T-cell (primary cell): ENCODE measurements at regions of chr4 and their contacts with region 1.

Region 1: GRCh38 chr4:22764183-22764582 is 71.4 kb downstream of the GBA3 start:
- DNase-seq: no peak
- ATAC-seq: no peak
- H3K4me3 ChIP-seq: no peak overlapping the region
- H3K4me3 Mint-ChIP-seq: no peak overlapping the region
- H3K27ac ChIP-seq: no peak overlapping the region
- H3K27ac Mint-ChIP-seq: no peak overlapping the region
- H3K4me1 ChIP-seq: no peaks in the 10 kb centered on the region
- H3K4me1 Mint-ChIP-seq: peaks cover 0 to 4% (median 4%) of the 10 kb centered on the region in 3 donors
- H3K27me3 ChIP-seq: no peaks in the 10 kb centered on the region
- H3K27me3 Mint-ChIP-seq: peaks cover 0 to 6% of the 10 kb centered on the region in 2 donors

Region 2: GRCh38 chr4:22539251-22539650 is 224.9 kb before region 1 on chr4:
- CTCF ChIA-PET with region 1: no interaction called
- POLR2A ChIA-PET with region 1: no interaction called
- DNase-seq: no peak
- ATAC-seq: no peak
- H3K4me3 ChIP-seq: no peak overlapping the region
- H3K4me3 Mint-ChIP-seq: no peak overlapping the region
- H3K27ac ChIP-seq: no peak overlapping the region
- H3K27ac Mint-ChIP-seq: no peak overlapping the region
- H3K4me1 ChIP-seq: no peaks in the 10 kb centered on the region
- H3K4me1 Mint-ChIP-seq: no peaks in the 10 kb centered on the region
- H3K27me3 ChIP-seq: no peaks in the 10 kb centered on the region
- H3K27me3 Mint-ChIP-seq: no peaks in the 10 kb centered on the region

Region 3: GRCh38 chr4:22678940-22679854 is 85.0 kb before region 1 on chr4:
- CTCF ChIA-PET with region 1: no interaction called
- POLR2A ChIA-PET with region 1: no interaction called
- DNase-seq: no peak
- ATAC-seq: no peak
- H3K4me3 ChIP-seq: no peak overlapping the region
- H3K4me3 Mint-ChIP-seq: no peak overlapping the region
- H3K27ac ChIP-seq: no peak overlapping the region
- H3K27ac Mint-ChIP-seq: no peak overlapping the region
- H3K4me1 ChIP-seq: peaks cover 0 to 34% of the 10 kb centered on the region in 2 experiments
- H3K4me1 Mint-ChIP-seq: peaks cover 33 to 59% (median 39%) of the 10 kb centered on the region in 3 donors
- H3K27me3 ChIP-seq: no peaks in the 10 kb centered on the region
- H3K27me3 Mint-ChIP-seq: no peaks in the 10 kb centered on the region

Region 4: GRCh38 chr4:23290656-23291055 is 526.5 kb after region 1 on chr4:
- CTCF ChIA-PET with region 1: no interaction called
- POLR2A ChIA-PET with region 1: interaction called in 1 of 2 experiments, 18 read pairs
- DNase-seq: no peak
- ATAC-seq: no peak
- H3K4me3 ChIP-seq: no peak overlapping the region
- H3K4me3 Mint-ChIP-seq: no peak overlapping the region
- H3K27ac ChIP-seq: no peak overlapping the region
- H3K27ac Mint-ChIP-seq: no peak overlapping the region
- H3K4me1 ChIP-seq: peaks cover 3 to 4% of the 10 kb centered on the region in 2 experiments
- H3K4me1 Mint-ChIP-seq: peaks cover 7 to 15% (median 8%) of the 10 kb centered on the region in 3 donors
- H3K27me3 ChIP-seq: no peaks in the 10 kb centered on the region
- H3K27me3 Mint-ChIP-seq: no peaks in the 10 kb centered on the region